HAP-1 (cell line): ENCODE measurements at regions of chrX and their contacts with region 1.

Region 1: GRCh38 chrX:100512471-100512870 is 72.3 kb upstream of the TNMD start:
- DNase-seq: peak in 1 of 2 experiments; percentile 51
- H3K4me3 ChIP-seq: no peak overlapping the region
- H3K4me1 ChIP-seq: no peaks in the 10 kb centered on the region
- H3K27me3 ChIP-seq: no peaks in the 10 kb centered on the region

Region 2: GRCh38 chrX:99308302-99308701 is 1204.2 kb before region 1 on chrX:
- in situ Hi-C with region 1: no loop called
- DNase-seq: no peak
- H3K4me3 ChIP-seq: no peak overlapping the region
- H3K4me1 ChIP-seq: no peaks in the 10 kb centered on the region
- H3K27me3 ChIP-seq: no peaks in the 10 kb centered on the region

Region 3: GRCh38 chrX:100341142-100341510 is 171.3 kb before region 1 on chrX:
- in situ Hi-C with region 1: no loop called
- DNase-seq: no peak
- H3K4me3 ChIP-seq: no peak overlapping the region
- H3K4me1 ChIP-seq: no peaks in the 10 kb centered on the region
- H3K27me3 ChIP-seq: peaks cover 13% of the 10 kb centered on the region

Region 4: DNA sequence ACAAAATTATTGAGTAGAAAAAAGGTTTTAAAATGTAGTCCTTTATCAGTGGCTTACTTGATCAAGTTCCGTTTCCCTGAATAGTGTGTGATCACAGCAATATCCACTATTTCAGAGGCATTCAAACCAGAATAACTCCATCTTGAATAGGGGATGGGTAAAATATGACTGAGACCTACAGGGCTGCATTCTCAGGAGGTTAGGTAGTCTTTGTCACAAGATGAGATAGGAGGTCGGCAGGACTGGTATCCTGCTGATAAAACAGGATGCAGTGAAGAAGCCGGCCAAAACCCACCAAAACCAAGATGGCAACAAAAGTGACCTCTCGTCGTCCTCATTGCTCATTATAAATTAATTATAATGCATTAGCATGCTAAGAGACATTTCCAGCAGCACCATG is 99.5 kb after region 1 on chrX:
- in situ Hi-C with region 1: loop called (anchors 5 kb)
- DNase-seq: no peak
- H3K4me3 ChIP-seq: no peak overlapping the region
- H3K4me1 ChIP-seq: peaks cover 30% of the 10 kb centered on the region
- H3K27me3 ChIP-seq: no peaks in the 10 kb centered on the region

Region 5: DNA sequence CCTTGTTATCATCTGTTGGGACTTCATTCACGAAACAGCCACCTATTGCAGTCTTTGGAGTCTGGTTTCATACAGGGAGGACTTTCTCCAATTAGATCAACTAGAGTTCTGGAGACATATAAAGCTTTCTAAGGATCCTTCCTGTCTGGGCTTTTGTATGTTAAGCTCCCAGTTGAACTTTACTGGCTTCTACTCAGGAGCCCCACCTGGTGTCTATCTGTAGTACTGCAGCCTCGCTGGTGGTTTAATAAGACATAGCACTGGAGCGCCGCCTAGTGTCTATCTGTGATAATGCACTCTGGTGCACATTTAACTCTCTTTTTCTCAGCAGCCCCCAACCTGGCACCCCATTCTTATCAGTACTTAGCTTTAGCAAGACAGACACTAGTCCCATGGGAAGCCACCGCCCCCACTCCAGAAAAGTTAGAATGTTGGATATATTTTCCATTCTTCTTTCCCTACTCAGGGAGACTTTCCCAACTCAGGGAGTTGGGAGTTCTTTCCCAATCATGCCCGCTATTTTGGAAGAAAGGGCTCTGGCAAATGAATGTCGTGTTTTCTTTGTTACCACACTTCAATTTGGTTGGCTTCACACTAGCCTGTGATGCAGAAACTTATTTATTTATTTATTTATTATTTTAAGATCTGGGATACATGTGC is 256.3 kb after region 1 on chrX:
- in situ Hi-C with region 1: loop called (anchors 25 kb)
- DNase-seq: peak; percentile 80 to 97
- H3K4me3 ChIP-seq: no peak overlapping the region
- H3K4me1 ChIP-seq: no peaks in the 10 kb centered on the region
- H3K27me3 ChIP-seq: peaks cover 31% of the 10 kb centered on the region